Psoas muscle (tissue), 8 donors: ENCODE measurements at regions of chr22 and their contacts with region 1.

Region 1: DNA sequence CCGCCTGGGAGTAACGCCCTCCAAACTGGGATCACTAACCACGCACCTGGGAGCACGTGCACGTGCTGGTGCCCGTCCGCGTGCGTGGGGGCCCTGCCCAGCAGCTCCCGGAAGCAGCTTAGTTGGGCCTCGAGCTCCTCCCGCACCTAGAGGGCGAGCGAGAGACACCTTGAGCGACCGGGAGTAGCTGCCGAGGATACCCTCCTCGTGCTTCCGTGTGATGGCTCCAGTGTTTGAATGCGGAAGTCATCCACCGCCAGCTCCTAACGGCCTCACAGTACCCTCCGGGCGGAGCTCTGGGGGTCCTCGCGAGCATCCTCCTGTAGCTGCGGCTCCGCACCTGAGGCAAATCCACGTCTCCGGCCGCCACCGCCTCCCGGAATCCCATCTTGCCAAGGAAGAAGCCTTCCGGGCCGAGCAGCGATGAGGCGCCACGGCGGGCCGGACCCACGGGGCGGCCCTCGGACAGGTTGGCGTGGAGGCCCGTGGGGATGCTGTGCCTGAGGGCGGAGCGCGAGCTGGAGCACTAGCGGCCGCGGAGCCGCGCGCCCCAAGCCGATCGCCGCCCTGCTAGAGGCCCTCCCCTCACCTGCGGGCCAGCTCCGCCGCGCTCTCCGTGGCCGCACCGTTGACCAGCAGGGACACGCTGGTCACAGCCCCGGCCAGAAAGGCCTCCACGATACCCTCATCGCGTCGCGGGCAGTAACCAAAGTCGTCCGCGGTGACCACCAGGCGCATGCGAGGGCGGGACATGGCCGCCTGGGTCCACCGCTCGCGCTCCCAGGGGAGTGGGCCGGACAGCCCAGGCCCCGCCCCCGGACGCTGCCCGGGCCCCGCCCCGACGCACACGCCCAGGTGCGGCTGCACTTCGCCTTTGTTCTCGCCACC is at the start of gene YDJC:
- DNase-seq: peak; percentile 93 to 97
- ATAC-seq: peak; percentile 94 to 98 (median 98)
- H3K4me3 ChIP-seq: peak within 1 kb of the TSS; percentile 86
- H3K27ac ChIP-seq: peak within 1 kb of the TSS; percentile 25
- H3K4me1 ChIP-seq: peaks cover 3% of the 10 kb centered on the region
- H3K27me3 ChIP-seq: no peaks in the 10 kb centered on the region
- CTCF ChIP-seq: peak; percentile 19
- total RNA-seq, gene YDJC: 2.4 to 5.4 (median 3.3) TPM

Region 2: GRCh38 chr22:21593406-21594232 is 35.9 kb before region 1 on chr22:
- intact Hi-C with region 1: loop called in 1 of 2 experiments (anchors 5 kb)
- DNase-seq: no peak
- ATAC-seq: no peak
- H3K4me3 ChIP-seq: no peak overlapping the region
- H3K27ac ChIP-seq: no peak overlapping the region
- H3K4me1 ChIP-seq: peaks cover 42% of the 10 kb centered on the region
- H3K27me3 ChIP-seq: no peaks in the 10 kb centered on the region
- CTCF ChIP-seq: no peak